ENCODE measurements at regions of chr1 and their contacts with region 1.

Region 1: GRCh38 chr1:21659099-21659923 is 9.8 kb downstream of the RAP1GAP start:
- DNase-seq: peak; percentile 80
- H3K4me3 Mint-ChIP-seq: peak overlapping the region; percentile 22
- H3K27ac Mint-ChIP-seq: no peak overlapping the region
- H3K4me1 Mint-ChIP-seq: peaks cover 5% of the 10 kb centered on the region
- H3K27me3 Mint-ChIP-seq: peaks cover 20% of the 10 kb centered on the region

Region 2: GRCh38 chr1:21594935-21595897 is 64.1 kb before region 1 on chr1:
- CTCF ChIA-PET with region 1: no interaction called
- intact Hi-C with region 1: loop called (anchors 1 kb)
- DNase-seq: peak; percentile 80
- H3K4me3 Mint-ChIP-seq: no peak overlapping the region
- H3K27ac Mint-ChIP-seq: no peak overlapping the region
- H3K4me1 Mint-ChIP-seq: peaks cover 4% of the 10 kb centered on the region
- H3K27me3 Mint-ChIP-seq: peaks cover 4% of the 10 kb centered on the region

Region 3: GRCh38 chr1:21770201-21770600 is 110.9 kb after region 1 on chr1:
- CTCF ChIA-PET with region 1: no interaction called
- intact Hi-C with region 1: no loop called
- DNase-seq: no peak
- H3K4me3 Mint-ChIP-seq: no peak overlapping the region
- H3K27ac Mint-ChIP-seq: no peak overlapping the region
- H3K4me1 Mint-ChIP-seq: peaks cover 47% of the 10 kb centered on the region
- H3K27me3 Mint-ChIP-seq: no peaks in the 10 kb centered on the region

Region 4: GRCh38 chr1:21814241-21814918 is 155.1 kb after region 1 on chr1:
- CTCF ChIA-PET with region 1: no interaction called
- intact Hi-C with region 1: no loop called
- DNase-seq: peak; percentile 16
- H3K4me3 Mint-ChIP-seq: peak overlapping the region; percentile 33
- H3K27ac Mint-ChIP-seq: no peak overlapping the region
- H3K4me1 Mint-ChIP-seq: peaks cover 7% of the 10 kb centered on the region
- H3K27me3 Mint-ChIP-seq: peaks cover 13% of the 10 kb centered on the region

Region 5: GRCh38 chr1:21963477-21964217 is 304.3 kb after region 1 on chr1:
- CTCF ChIA-PET with region 1: no interaction called
- intact Hi-C with region 1: loop called (anchors 5 kb)
- DNase-seq: peak; percentile 94
- H3K4me3 Mint-ChIP-seq: no peak overlapping the region
- H3K27ac Mint-ChIP-seq: peak overlapping the region; percentile 11
- H3K4me1 Mint-ChIP-seq: peaks cover 3% of the 10 kb centered on the region
- H3K27me3 Mint-ChIP-seq: no peaks in the 10 kb centered on the region